Thyroid gland (tissue), 4 donors: ENCODE measurements at regions of chr1 and their contacts with region 1.

Region 1: GRCh38 chr1:6245086-6245868 is 1.3 kb downstream of the HES3 start:
- DNase-seq: peak; percentile 76 to 80
- H3K4me3 ChIP-seq: no peak overlapping the region
- H3K27ac ChIP-seq: no peak overlapping the region
- H3K4me1 ChIP-seq: peaks cover 0 to 30% of the 10 kb centered on the region in 2 donors
- H3K27me3 ChIP-seq: peaks cover 41% of the 10 kb centered on the region
- CTCF ChIP-seq: peak; percentile 36 to 95 (median 80)
- POLR2A ChIP-seq: no peak

Region 2: GRCh38 chr1:6343506-6344405 is 98.5 kb after region 1 on chr1:
- intact Hi-C with region 1: loop called (anchors 2 kb)
- DNase-seq: peak; percentile 57 to 63
- H3K4me3 ChIP-seq: no peak overlapping the region
- H3K27ac ChIP-seq: no peak overlapping the region
- H3K4me1 ChIP-seq: no peaks in the 10 kb centered on the region
- H3K27me3 ChIP-seq: no peaks in the 10 kb centered on the region
- CTCF ChIP-seq: peak; percentile 55 to 83 (median 80)
- POLR2A ChIP-seq: no peak

Region 3: DNA sequence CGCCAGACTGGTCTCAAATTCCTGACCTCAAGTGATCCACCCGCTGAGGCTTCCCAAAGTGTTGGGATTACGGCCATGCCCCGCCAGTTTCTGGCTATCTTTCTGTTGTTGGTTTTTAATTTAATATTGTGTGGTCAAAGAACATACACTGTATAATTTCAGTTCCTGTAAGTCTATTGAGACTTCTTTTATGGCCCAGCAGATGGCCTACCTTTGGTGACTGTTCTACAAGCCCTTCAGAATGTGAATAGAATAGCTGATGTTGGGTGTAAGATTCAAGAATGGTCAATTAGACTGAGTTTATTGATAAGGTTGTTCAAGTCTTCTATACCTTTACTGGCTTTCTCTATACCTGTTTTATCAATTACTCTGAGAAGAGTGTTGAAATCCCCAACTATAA is 163.8 kb after region 1 on chr1:
- intact Hi-C with region 1: loop called (anchors 5 kb)
- DNase-seq: no peak
- H3K4me3 ChIP-seq: no peak overlapping the region
- H3K27ac ChIP-seq: no peak overlapping the region
- H3K4me1 ChIP-seq: no peaks in the 10 kb centered on the region
- H3K27me3 ChIP-seq: no peaks in the 10 kb centered on the region
- CTCF ChIP-seq: no peak
- POLR2A ChIP-seq: no peak